Endothelial cell of umbilical vein (primary cell): ENCODE measurements at regions of chr5 and their contacts with region 1.

Region 1: GRCh38 chr5:173750538-173751265 is 134.3 kb upstream of the BOD1 start:
- DNase-seq: no peak
- H3K4me3 ChIP-seq: no peak overlapping the region
- H3K27ac ChIP-seq: no peak overlapping the region
- H3K4me1 ChIP-seq: no peaks in the 10 kb centered on the region
- H3K27me3 ChIP-seq: no peaks in the 10 kb centered on the region
- CTCF ChIP-seq: no peak
- POLR2A ChIP-seq: no peak

Region 2: DNA sequence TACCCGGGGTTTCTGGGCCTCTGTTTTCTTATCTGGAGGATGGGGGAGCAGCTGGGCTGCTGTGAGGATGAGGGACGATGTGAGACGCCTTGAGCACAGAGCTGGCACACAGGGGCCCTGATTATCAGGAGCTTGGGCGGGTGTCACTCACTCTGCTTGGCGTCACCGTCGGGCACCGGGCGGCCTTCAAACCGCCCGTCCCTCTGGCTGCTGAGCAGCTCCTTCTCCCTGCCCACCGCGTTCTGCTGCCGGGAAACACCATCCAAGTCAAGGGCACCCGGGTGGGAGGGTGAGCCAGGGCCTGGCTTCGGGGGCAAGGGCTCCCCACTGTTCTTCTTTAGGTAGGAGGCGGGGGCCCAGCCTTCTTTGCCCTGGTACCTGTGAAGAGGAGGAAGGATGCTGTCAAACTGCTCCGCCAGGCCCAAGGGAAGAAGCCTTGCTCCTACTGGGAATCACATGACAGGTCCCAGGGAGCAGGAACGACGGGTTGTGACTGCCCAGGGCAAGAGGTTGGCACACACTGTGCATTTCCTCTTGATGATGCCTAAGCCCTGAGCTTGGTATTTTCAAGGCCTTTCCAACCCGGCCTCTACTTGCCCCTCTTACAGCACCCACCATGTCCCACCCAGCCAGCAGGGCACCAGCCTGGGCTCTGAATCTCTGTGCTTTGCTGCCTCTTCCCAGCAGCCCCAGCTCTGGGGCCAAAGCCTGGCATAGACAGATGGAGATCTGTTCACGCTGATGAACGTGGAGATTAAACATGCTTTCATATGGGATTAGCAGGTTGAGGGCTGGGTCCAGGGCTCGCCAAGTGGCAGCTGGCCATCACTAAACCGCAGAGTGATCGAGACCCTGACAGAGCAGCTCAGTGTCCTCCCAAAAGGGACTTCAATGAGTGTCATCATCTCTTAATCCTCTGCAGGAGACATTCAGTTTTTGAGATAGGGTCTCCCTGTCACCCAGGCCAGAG is 1400.2 kb before region 1 on chr5:
- CTCF ChIA-PET with region 1: no interaction called
- POLR2A ChIA-PET with region 1: no interaction called
- dilution Hi-C with region 1: no loop called
- intact Hi-C with region 1: no loop called
- DNase-seq: no peak
- H3K4me3 ChIP-seq: no peak overlapping the region
- H3K27ac ChIP-seq: no peak overlapping the region
- H3K4me1 ChIP-seq: peaks cover 6% of the 10 kb centered on the region
- H3K27me3 ChIP-seq: no peaks in the 10 kb centered on the region
- CTCF ChIP-seq: no peak
- POLR2A ChIP-seq: no peak

Region 3: GRCh38 chr5:173730632-173731298 is 19.9 kb before region 1 on chr5:
- CTCF ChIA-PET with region 1: no interaction called
- POLR2A ChIA-PET with region 1: no interaction called
- dilution Hi-C with region 1: no loop called
- intact Hi-C with region 1: loop called (anchors 2 kb)
- DNase-seq: no peak
- H3K4me3 ChIP-seq: no peak overlapping the region
- H3K27ac ChIP-seq: no peak overlapping the region
- H3K4me1 ChIP-seq: no peaks in the 10 kb centered on the region
- H3K27me3 ChIP-seq: no peaks in the 10 kb centered on the region
- CTCF ChIP-seq: no peak
- POLR2A ChIP-seq: no peak